Naive thymus-derived CD4-positive, alpha-beta T cell (primary cell): ENCODE measurements at regions of chr16 and their contacts with region 1.

Region 1: DNA sequence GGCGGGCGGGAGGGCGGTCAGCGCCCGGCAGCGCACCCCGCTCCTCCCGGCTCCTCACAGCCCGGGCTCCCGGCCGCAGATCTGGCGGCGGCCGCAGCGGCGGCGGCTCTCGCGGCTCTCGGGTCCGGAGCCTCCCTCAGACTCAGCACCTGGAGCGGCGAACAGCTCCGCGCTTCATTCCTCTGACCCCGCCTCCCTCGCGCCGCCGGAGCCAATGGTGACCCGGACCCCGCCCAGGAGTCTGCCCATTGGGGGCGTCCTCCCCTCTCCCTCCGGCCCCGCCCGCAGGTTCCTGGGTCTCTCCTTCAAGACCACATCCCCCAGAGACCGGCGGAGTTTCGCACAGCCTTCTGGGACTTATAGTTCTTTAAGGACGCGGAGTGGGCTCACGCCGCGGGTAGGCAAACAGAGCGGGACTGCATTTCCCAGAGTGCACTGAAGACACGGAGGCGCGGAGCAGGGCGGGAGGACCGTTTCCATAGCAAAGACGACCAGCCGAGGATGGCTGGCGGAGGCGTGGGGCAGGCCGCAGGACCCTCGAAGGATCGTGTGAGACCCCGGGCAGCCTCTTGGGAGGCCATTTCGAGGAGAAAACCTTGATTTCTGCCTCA is at the start of gene SMPD3:
- DNase-seq: peak; percentile 95 to 99 (median 97)
- ATAC-seq: peak; percentile 99
- H3K4me3 ChIP-seq: peak within 1 kb of the TSS; percentile 63
- H3K4me3 Mint-ChIP-seq: peak within 1 kb of the TSS; percentile 74 to 93 (median 76)
- H3K27ac ChIP-seq: no peak within 1 kb of the TSS
- H3K27ac Mint-ChIP-seq: peak within 1 kb of the TSS in 8 of 9 donors; percentile 2 to 80 (median 38)
- H3K4me1 ChIP-seq: peaks cover 21 to 28% of the 10 kb centered on the region in 2 donors
- H3K4me1 Mint-ChIP-seq: peaks cover 16 to 27% (median 22%) of the 10 kb centered on the region in 7 donors
- H3K27me3 ChIP-seq: peaks cover 14% of the 10 kb centered on the region in 2 donors
- H3K27me3 Mint-ChIP-seq: peaks cover 12 to 56% (median 23%) of the 10 kb centered on the region in 5 donors
- total RNA-seq, gene SMPD3: 0.57 to 6.1 (median 1.8) TPM

Region 2: DNA sequence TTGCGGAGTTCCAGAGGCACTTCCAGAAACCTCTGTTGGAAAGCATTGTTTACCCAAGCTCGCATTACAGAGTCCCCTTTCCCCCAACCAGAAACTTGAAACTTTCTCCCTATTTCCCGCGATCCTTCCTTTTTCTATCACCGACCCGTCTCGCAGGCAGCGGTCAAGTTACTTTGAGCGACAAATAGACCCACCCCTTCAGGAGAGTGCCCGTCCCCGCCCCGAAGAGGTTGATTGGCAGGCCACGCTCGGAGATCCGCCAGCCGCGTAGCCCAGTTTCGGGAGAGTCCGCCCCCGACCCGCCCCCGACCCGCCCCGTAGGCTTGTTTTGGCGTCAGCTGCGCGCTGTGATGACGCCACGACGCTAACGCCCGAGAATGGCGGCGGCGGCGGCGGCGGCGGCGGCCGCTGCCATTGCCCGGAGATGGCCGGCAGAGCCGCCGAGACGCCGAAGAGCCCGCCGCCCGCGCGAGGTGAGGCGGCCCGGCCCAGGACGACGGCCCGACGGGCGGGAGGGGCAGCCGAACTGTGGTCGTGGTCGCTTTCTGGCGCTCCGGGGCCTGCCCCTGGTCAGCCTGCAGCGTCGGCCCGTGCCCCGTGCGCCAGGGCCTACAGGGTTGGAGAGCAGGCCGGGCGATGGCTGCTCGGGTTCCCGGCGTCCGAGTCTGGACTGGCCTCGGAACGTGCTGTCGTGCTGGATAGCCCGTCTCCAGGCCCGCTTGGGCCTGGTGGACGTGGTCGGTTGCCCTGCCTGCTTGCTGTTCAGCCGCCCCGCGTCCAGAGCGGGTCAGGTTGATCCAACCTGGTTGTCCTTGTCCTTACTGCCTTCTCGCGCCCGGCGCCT is 555.3 kb before region 1 on chr16 and contains the start of gene PSKH1:
- CTCF ChIA-PET with region 1: no interaction called
- POLR2A ChIA-PET with region 1: no interaction called
- intact Hi-C with region 1: loop called in 1 of 2 experiments (anchors 1 kb)
- DNase-seq: peak; percentile 77 to 92 (median 84)
- ATAC-seq: peak; percentile 99
- H3K4me3 ChIP-seq: peak within 1 kb of the TSS; percentile 89
- H3K4me3 Mint-ChIP-seq: peak within 1 kb of the TSS; percentile 86 to 97 (median 94)
- H3K27ac ChIP-seq: peak within 1 kb of the TSS; percentile 94
- H3K27ac Mint-ChIP-seq: peak within 1 kb of the TSS; percentile 85 to 98 (median 97)
- H3K4me1 ChIP-seq: peaks cover 12 to 15% of the 10 kb centered on the region in 2 donors
- H3K4me1 Mint-ChIP-seq: peaks cover 22 to 48% (median 35%) of the 10 kb centered on the region in 7 donors
- H3K27me3 ChIP-seq: no peaks in the 10 kb centered on the region
- H3K27me3 Mint-ChIP-seq: no peaks in the 10 kb centered on the region
- total RNA-seq, gene PSKH1: 18.0 to 28.5 (median 23.3) TPM

Region 3: GRCh38 chr16:68310761-68311511 is 137.5 kb before region 1 on chr16 and contains the starts of genes PRMT7 and SLC7A6OS:
- CTCF ChIA-PET with region 1: no interaction called
- POLR2A ChIA-PET with region 1: no interaction called
- intact Hi-C with region 1: loop called (anchors 1 to 2 kb)
- DNase-seq: peak; percentile 77 to 94 (median 92)
- ATAC-seq: peak; percentile 99
- H3K4me3 ChIP-seq: peak within 1 kb of the TSS; percentile 99
- H3K4me3 Mint-ChIP-seq: peak within 1 kb of the TSS; percentile 88 to 100 (median 98)
- H3K27ac ChIP-seq: peak within 1 kb of the TSS; percentile 91
- H3K27ac Mint-ChIP-seq: peak within 1 kb of the TSS; percentile 77 to 99 (median 96)
- H3K4me1 ChIP-seq: peaks cover 25 to 32% of the 10 kb centered on the region in 2 donors
- H3K4me1 Mint-ChIP-seq: peaks cover 33 to 69% (median 59%) of the 10 kb centered on the region in 7 donors
- H3K27me3 ChIP-seq: no peaks in the 10 kb centered on the region
- H3K27me3 Mint-ChIP-seq: no peaks in the 10 kb centered on the region
- total RNA-seq, gene PRMT7: 60.8 to 95.1 (median 89.4) TPM
- total RNA-seq, gene SLC7A6OS: 31.4 to 50.3 (median 34.8) TPM

Region 4: DNA sequence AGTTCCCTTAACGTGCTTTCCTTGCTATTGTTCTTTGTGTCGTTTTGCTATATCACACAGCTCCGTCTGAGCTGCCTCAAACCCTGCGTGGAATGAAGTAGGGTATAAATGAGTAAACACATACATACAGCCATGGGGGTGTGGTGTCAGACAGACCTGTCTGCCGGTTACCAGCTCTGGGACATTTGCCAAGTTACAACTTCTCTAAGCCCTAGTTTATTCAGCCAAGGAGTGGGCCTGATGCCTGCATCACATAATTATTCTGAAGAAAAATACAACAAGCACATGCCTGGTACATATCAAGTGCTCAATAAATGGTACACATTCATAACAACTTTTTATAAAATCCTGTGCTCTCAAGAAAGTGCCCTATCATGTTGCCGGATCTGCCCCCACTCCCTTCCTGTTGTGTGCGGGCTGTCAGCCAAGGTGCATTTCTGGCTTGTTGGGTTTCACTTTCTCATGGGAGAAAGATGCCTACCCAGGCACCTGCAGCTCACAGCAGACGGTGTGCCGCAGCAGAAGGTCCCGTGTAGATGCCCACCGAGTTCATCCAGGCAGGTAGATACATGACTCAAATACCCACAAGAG is 30.7 kb before region 1 on chr16:
- CTCF ChIA-PET with region 1: interaction called, 3 read pairs
- POLR2A ChIA-PET with region 1: interaction called, 13 read pairs
- intact Hi-C with region 1: loop called (anchors 1 kb)
- DNase-seq: peak; percentile 35 to 91 (median 85)
- ATAC-seq: peak; percentile 92
- H3K4me3 ChIP-seq: peak overlapping the region; percentile 32
- H3K4me3 Mint-ChIP-seq: peak overlapping the region; percentile 76 to 89 (median 86)
- H3K27ac ChIP-seq: peak overlapping the region; percentile 67
- H3K27ac Mint-ChIP-seq: peak overlapping the region; percentile 94 to 100 (median 98)
- H3K4me1 ChIP-seq: peaks cover 40 to 64% of the 10 kb centered on the region in 2 donors
- H3K4me1 Mint-ChIP-seq: peaks cover 44 to 89% (median 75%) of the 10 kb centered on the region in 7 donors
- H3K27me3 ChIP-seq: no peaks in the 10 kb centered on the region
- H3K27me3 Mint-ChIP-seq: no peaks in the 10 kb centered on the region

Region 5: GRCh38 chr16:68512183-68512582 is 63.7 kb after region 1 on chr16:
- CTCF ChIA-PET with region 1: interaction called, 5 read pairs
- POLR2A ChIA-PET with region 1: no interaction called
- intact Hi-C with region 1: loop called in 1 of 2 experiments (anchors 1 kb)
- DNase-seq: peak in 1 of 9 donors; percentile 1
- ATAC-seq: no peak
- H3K4me3 ChIP-seq: no peak overlapping the region
- H3K4me3 Mint-ChIP-seq: peak overlapping the region in 1 of 10 donors; percentile 41
- H3K27ac ChIP-seq: no peak overlapping the region
- H3K27ac Mint-ChIP-seq: peak overlapping the region in 1 of 9 donors; percentile 10
- H3K4me1 ChIP-seq: peaks cover 0 to 3% of the 10 kb centered on the region in 2 donors
- H3K4me1 Mint-ChIP-seq: peaks cover 0 to 14% (median 3%) of the 10 kb centered on the region in 7 donors
- H3K27me3 ChIP-seq: no peaks in the 10 kb centered on the region
- H3K27me3 Mint-ChIP-seq: peaks cover 0 to 25% (median 0%) of the 10 kb centered on the region in 5 donors

Region 6: GRCh38 chr16:69386596-69386995 is 938.1 kb after region 1 on chr16:
- CTCF ChIA-PET with region 1: no interaction called
- POLR2A ChIA-PET with region 1: no interaction called
- intact Hi-C with region 1: loop called in 1 of 2 experiments (anchors 1 kb)
- DNase-seq: no peak
- ATAC-seq: no peak
- H3K4me3 ChIP-seq: no peak overlapping the region
- H3K4me3 Mint-ChIP-seq: peak overlapping the region in 8 of 10 donors; percentile 86 to 96 (median 92)
- H3K27ac ChIP-seq: peak overlapping the region; percentile 95
- H3K27ac Mint-ChIP-seq: peak overlapping the region in 6 of 9 donors; percentile 90 to 99 (median 95)
- H3K4me1 ChIP-seq: peaks cover 10 to 27% of the 10 kb centered on the region in 2 donors
- H3K4me1 Mint-ChIP-seq: peaks cover 22 to 37% (median 35%) of the 10 kb centered on the region in 7 donors
- H3K27me3 ChIP-seq: no peaks in the 10 kb centered on the region
- H3K27me3 Mint-ChIP-seq: no peaks in the 10 kb centered on the region

Region 7: GRCh38 chr16:69443927-69444631 is 995.6 kb after region 1 on chr16:
- CTCF ChIA-PET with region 1: no interaction called
- POLR2A ChIA-PET with region 1: no interaction called
- intact Hi-C with region 1: no loop called
- DNase-seq: peak in 7 of 9 donors; percentile 1 to 51 (median 35)
- ATAC-seq: peak; percentile 85
- H3K4me3 ChIP-seq: peak overlapping the region; percentile 45
- H3K4me3 Mint-ChIP-seq: peak overlapping the region; percentile 68 to 90 (median 86)
- H3K27ac ChIP-seq: peak overlapping the region; percentile 64
- H3K27ac Mint-ChIP-seq: peak overlapping the region; percentile 86 to 98 (median 96)
- H3K4me1 ChIP-seq: peaks cover 10 to 26% of the 10 kb centered on the region in 2 donors
- H3K4me1 Mint-ChIP-seq: peaks cover 16 to 51% (median 41%) of the 10 kb centered on the region in 7 donors
- H3K27me3 ChIP-seq: no peaks in the 10 kb centered on the region
- H3K27me3 Mint-ChIP-seq: no peaks in the 10 kb centered on the region